T-cell (primary cell): ENCODE measurements at regions of chr1 and their contacts with region 1.

Region 1: DNA sequence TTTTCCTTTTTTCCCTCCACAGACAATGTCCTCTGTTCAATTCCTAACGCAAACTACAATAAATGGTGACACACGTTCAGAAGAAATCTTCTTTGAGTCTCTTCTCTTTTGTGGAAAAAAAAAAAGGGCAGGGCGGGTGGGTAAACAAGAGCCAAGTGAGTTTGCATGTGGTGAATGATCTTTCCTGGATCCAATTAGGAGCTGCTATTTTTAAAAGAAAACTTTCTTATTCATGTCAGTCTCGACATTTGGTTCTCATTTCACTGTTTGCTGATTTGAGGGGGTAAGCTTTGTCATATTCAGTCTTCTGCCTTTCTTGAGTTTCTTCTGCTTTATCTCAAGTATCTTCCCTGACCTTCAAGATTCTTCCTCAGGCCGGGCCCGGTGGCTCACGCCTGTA is 29.2 kb upstream of the KIF1B start:
- DNase-seq: no peak
- ATAC-seq: no peak
- H3K4me3 ChIP-seq: no peak overlapping the region
- H3K4me3 Mint-ChIP-seq: no peak overlapping the region
- H3K27ac ChIP-seq: no peak overlapping the region
- H3K27ac Mint-ChIP-seq: no peak overlapping the region
- H3K4me1 ChIP-seq: no peaks in the 10 kb centered on the region
- H3K4me1 Mint-ChIP-seq: no peaks in the 10 kb centered on the region
- H3K27me3 ChIP-seq: no peaks in the 10 kb centered on the region
- H3K27me3 Mint-ChIP-seq: no peaks in the 10 kb centered on the region

Region 2: GRCh38 chr1:11641776-11642305 is 1460.7 kb after region 1 on chr1:
- CTCF ChIA-PET with region 1: no interaction called
- POLR2A ChIA-PET with region 1: no interaction called
- DNase-seq: no peak
- ATAC-seq: no peak
- H3K4me3 ChIP-seq: no peak overlapping the region
- H3K4me3 Mint-ChIP-seq: no peak overlapping the region
- H3K27ac ChIP-seq: no peak overlapping the region
- H3K27ac Mint-ChIP-seq: no peak overlapping the region
- H3K4me1 ChIP-seq: no peaks in the 10 kb centered on the region
- H3K4me1 Mint-ChIP-seq: peaks cover 0 to 2% (median 0%) of the 10 kb centered on the region in 3 donors
- H3K27me3 ChIP-seq: peaks cover 0 to 28% of the 10 kb centered on the region in 2 experiments
- H3K27me3 Mint-ChIP-seq: peaks cover 0 to 8% of the 10 kb centered on the region in 2 donors

Region 3: DNA sequence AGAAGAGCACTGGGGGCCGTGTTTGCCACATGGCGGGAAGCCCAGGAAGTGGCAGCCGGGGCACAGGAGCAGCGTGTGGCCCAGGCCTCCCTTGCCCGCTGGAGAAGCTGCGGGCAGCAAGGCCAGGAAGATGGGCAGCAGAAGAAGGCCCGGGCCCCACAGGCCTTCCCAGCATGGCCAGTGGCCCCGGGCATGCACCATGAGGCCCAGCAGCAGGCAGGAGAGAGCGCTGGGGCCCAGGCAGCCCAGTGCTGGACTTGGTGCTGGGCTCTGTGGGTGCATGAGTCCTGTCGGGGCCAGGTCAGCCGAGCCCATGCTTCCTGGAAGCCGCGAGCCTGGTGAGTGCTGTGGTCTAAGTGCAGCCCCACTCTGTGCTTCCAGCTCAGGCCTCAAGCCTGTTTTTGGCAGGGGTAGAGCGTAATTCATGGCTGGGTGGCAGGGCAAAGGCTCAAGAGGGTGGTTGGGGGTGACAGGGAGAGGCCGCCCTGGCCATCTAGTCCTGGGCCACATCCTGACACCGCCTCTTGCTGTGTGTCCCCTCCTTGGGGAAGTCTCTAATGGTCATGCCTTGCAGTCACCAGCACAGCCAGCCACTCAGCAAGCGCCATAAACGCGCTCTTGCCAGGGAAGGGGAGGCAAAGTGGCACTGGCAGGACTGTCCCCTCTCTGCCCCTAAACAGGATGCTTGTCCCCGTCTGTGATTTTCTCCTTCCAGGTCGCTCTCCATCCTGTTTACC is 1603.3 kb after region 1 on chr1:
- CTCF ChIA-PET with region 1: no interaction called
- POLR2A ChIA-PET with region 1: interaction called in 1 of 2 experiments, 10 read pairs
- DNase-seq: no peak
- ATAC-seq: peak in 2 of 4 experiments; percentile 4 to 6
- H3K4me3 ChIP-seq: peak overlapping the region; percentile 27 to 36
- H3K4me3 Mint-ChIP-seq: peak overlapping the region in 1 of 3 donors; percentile 48
- H3K27ac ChIP-seq: no peak overlapping the region
- H3K27ac Mint-ChIP-seq: no peak overlapping the region
- H3K4me1 ChIP-seq: peaks cover 0 to 13% of the 10 kb centered on the region in 2 experiments
- H3K4me1 Mint-ChIP-seq: peaks cover 0 to 9% (median 9%) of the 10 kb centered on the region in 3 donors
- H3K27me3 ChIP-seq: no peaks in the 10 kb centered on the region
- H3K27me3 Mint-ChIP-seq: no peaks in the 10 kb centered on the region